Colonic mucosa (tissue), 4 donors: ENCODE measurements at regions of chr17 and their contacts with region 1.

Region 1: GRCh38 chr17:63425482-63425881 is 20.6 kb downstream of the CYB561 start:
- DNase-seq: peak; percentile 84
- H3K4me3 ChIP-seq: no peak overlapping the region
- H3K27ac ChIP-seq: no peak overlapping the region
- H3K4me1 ChIP-seq: no peaks in the 10 kb centered on the region
- H3K27me3 ChIP-seq: no peaks in the 10 kb centered on the region
- CTCF ChIP-seq: peak; percentile 96

Region 2: DNA sequence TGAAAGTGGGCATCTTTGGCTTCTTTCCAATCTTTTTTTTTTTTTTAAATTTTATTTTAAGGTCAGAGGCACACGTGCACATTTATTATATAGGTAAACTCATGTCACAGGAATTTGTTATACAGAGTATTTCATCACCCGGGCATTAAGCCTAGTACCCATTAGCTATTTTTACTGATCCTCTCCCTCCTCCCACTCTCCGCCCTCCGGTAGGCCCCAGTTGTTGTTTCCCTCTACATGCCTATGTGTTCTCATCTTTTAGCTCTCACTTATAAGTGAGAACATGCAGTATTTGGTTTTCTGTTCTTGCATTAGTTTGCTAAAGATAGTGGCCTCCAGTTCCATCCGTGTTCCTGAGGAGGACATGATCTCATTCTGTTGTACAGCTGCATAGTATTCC is 87.9 kb before region 1 on chr17:
- intact Hi-C with region 1: no loop called
- DNase-seq: no peak
- H3K4me3 ChIP-seq: no peak overlapping the region
- H3K27ac ChIP-seq: no peak overlapping the region
- H3K4me1 ChIP-seq: no peaks in the 10 kb centered on the region
- H3K27me3 ChIP-seq: no peaks in the 10 kb centered on the region
- CTCF ChIP-seq: no peak

Region 3: GRCh38 chr17:63356337-63356757 is 69.1 kb before region 1 on chr17:
- intact Hi-C with region 1: no loop called
- DNase-seq: no peak
- H3K4me3 ChIP-seq: no peak overlapping the region
- H3K27ac ChIP-seq: no peak overlapping the region
- H3K4me1 ChIP-seq: peaks cover 7% of the 10 kb centered on the region
- H3K27me3 ChIP-seq: no peaks in the 10 kb centered on the region
- CTCF ChIP-seq: no peak

Region 4: GRCh38 chr17:63478791-63479494 is 53.5 kb after region 1 on chr17:
- intact Hi-C with region 1: loop called (anchors 5 kb)
- DNase-seq: peak; percentile 89
- H3K4me3 ChIP-seq: no peak overlapping the region
- H3K27ac ChIP-seq: no peak overlapping the region
- H3K4me1 ChIP-seq: peaks cover 18% of the 10 kb centered on the region
- H3K27me3 ChIP-seq: peaks cover 6% of the 10 kb centered on the region
- CTCF ChIP-seq: peak; percentile 68

Region 5: GRCh38 chr17:63613663-63614062 is 188.2 kb after region 1 on chr17:
- intact Hi-C with region 1: loop called (anchors 2 kb)
- DNase-seq: no peak
- H3K4me3 ChIP-seq: no peak overlapping the region
- H3K27ac ChIP-seq: no peak overlapping the region
- H3K4me1 ChIP-seq: no peaks in the 10 kb centered on the region
- H3K27me3 ChIP-seq: no peaks in the 10 kb centered on the region
- CTCF ChIP-seq: no peak

Region 6: DNA sequence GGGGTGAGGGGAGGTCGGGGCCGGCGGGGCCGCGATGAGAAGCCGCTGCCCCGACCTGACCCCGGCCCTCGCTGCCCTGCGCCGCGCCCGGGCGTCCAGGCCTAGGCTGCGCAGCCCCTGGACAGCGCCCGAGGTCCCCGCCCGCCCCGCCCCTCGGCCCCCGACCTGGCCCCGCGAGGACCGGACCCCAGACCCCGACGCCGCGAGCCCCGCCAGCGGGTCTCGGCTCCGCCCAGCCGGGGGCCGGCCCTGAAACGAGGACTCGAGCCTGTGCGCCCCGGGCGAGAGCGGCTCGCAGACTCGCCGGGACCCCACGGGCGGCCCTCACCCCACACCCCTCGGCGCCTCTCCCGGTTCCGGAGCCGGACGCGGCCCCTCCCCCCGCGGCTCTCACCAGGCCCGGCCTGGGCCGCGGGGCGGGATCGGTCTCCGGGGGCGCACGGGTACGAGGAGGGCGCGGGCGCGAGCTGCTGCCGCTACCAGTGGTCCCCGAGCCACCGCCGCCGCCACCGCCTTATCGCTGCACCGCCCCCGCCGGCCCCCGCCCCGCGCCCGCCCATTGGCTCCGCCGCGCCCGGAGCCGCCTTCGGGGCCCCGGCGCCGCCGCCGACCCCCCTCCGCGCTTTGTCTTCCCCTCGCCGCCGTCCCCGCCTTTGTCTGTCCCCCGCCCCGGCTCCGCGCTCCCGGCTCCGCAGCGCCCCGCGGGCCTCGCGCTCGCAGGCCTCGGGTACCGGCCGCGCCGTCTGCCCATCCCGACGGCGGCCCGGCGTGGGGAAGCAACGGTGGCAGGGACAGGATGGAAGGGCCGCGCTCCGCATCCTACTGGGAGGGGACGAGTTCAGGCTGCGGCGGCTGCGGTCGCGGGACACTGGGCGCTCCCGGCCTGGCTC is 274.4 kb after region 1 on chr17 and contains the start of gene LIMD2:
- intact Hi-C with region 1: loop called (anchors 10 kb)
- DNase-seq: peak; percentile 54
- H3K4me3 ChIP-seq: peak within 1 kb of the TSS; percentile 46
- H3K27ac ChIP-seq: peak within 1 kb of the TSS; percentile 78
- H3K4me1 ChIP-seq: no peaks in the 10 kb centered on the region
- H3K27me3 ChIP-seq: peaks cover 7% of the 10 kb centered on the region
- CTCF ChIP-seq: no peak
- total RNA-seq, gene LIMD2: 3.6 to 5.6 TPM